Adrenal gland (tissue), 19 donors: ENCODE measurements at regions of chr5 and their contacts with region 1.

Region 1: DNA sequence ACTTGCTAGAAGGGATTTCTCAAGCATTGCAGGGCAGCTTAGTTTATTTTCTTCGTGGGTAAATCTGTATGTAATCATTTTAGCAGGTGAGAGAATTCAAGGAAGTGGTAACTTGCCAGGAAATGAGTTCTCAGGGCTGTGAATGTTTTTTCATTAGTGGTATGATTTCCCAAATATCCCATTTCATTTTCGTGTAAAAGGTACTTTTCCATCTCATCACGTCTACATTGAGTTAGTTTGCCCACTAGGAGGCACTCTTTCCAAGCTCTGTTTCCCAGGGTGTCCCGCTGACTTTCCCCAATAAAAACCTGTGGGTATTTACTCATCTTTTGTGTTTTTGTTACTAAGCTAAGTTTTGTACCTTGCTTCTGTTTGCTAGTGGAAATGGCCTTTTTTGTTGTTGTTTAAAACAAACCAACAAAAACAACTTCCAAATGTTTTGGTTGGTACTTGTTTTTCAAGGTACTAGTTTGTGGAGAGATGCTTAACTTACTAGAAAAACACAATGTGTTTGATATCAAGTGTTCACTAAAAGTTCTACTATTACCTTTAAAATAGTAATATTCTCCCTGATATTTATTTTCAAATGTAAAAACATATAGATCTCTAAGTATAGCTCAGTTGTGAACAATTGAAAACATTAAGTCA is 373.6 kb downstream of the ADGRV1 start:
- DNase-seq: peak; percentile 63 to 83 (median 80)
- H3K4me3 ChIP-seq: no peak overlapping the region
- H3K27ac ChIP-seq: peak overlapping the region; percentile 32 to 84 (median 77)
- H3K4me1 ChIP-seq: peaks cover 17 to 32% of the 10 kb centered on the region in 2 donors
- H3K27me3 ChIP-seq: no peaks in the 10 kb centered on the region
- CTCF ChIP-seq: peak; percentile 86 to 98 (median 88)
- POLR2A ChIP-seq: no peak

Region 2: GRCh38 chr5:90658620-90659019 is 273.6 kb before region 1 on chr5:
- intact Hi-C with region 1: no loop called
- DNase-seq: no peak
- H3K4me3 ChIP-seq: no peak overlapping the region
- H3K27ac ChIP-seq: no peak overlapping the region
- H3K4me1 ChIP-seq: no peaks in the 10 kb centered on the region
- H3K27me3 ChIP-seq: no peaks in the 10 kb centered on the region
- CTCF ChIP-seq: no peak
- POLR2A ChIP-seq: no peak

Region 3: GRCh38 chr5:91038180-91038808 is 106.1 kb after region 1 on chr5:
- intact Hi-C with region 1: loop called in 1 of 2 experiments (anchors 10 kb)
- DNase-seq: peak in 6 of 7 donors; percentile 38 to 82 (median 58)
- H3K4me3 ChIP-seq: no peak overlapping the region
- H3K27ac ChIP-seq: peak overlapping the region; percentile 13 to 53 (median 39)
- H3K4me1 ChIP-seq: peaks cover 36 to 41% of the 10 kb centered on the region in 2 donors
- H3K27me3 ChIP-seq: no peaks in the 10 kb centered on the region
- CTCF ChIP-seq: no peak
- POLR2A ChIP-seq: peak in 1 of 2 donors; percentile 38

Region 4: DNA sequence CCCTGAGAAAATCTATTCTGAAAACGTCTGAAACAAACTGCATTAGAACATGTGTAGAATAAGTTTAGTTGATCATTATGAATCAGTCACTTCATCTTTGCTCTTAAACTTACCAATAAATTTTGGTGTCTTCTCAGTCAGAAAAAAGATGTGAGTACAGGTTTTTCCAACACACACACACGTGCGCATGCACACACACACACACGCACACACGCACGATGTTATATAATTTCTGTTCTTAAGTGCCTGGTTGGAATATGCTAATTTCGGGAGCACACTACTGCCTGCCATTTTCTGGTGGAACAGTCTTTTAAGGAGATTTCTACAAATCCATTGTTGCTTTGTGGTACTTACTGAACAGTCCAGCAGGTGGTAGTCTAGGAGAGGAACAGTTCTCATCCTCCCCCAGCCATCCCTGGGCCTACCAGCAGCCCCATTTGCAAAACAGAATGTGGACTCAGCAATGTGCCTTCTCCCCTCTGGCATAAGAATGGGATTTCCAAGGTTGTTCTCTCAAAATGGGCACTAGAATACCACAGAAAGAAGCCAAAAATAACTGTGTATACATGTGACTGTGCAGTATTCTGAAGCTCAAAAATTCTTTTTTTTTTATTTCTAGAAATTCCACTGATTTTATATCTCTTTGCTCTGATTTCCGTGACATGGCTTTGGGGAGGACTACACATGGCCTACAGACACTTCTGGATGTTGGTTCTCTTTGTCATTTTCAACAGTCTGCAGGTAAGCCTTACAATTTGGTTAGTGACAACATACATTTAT is 169.6 kb after region 1 on chr5:
- intact Hi-C with region 1: loop called in 1 of 2 experiments (anchors 10 kb)
- DNase-seq: peak; percentile 73 to 86 (median 79)
- H3K4me3 ChIP-seq: no peak overlapping the region
- H3K27ac ChIP-seq: peak overlapping the region in 2 of 5 donors; percentile 24 to 26
- H3K4me1 ChIP-seq: peaks cover under 1 to 43% of the 10 kb centered on the region in 2 donors
- H3K27me3 ChIP-seq: no peaks in the 10 kb centered on the region
- CTCF ChIP-seq: peak; percentile 43 to 93 (median 87)
- POLR2A ChIP-seq: no peak

Region 5: GRCh38 chr5:91114658-91115057 is 182.5 kb after region 1 on chr5:
- intact Hi-C with region 1: no loop called
- DNase-seq: no peak
- H3K4me3 ChIP-seq: no peak overlapping the region
- H3K27ac ChIP-seq: peak overlapping the region in 3 of 5 donors; percentile 3 to 72 (median 58)
- H3K4me1 ChIP-seq: peaks cover 7 to 33% of the 10 kb centered on the region in 2 donors
- H3K27me3 ChIP-seq: no peaks in the 10 kb centered on the region
- CTCF ChIP-seq: no peak
- POLR2A ChIP-seq: no peak